BJ (cell line): ENCODE measurements at regions of chr22 and their contacts with region 1.

Region 1: DNA sequence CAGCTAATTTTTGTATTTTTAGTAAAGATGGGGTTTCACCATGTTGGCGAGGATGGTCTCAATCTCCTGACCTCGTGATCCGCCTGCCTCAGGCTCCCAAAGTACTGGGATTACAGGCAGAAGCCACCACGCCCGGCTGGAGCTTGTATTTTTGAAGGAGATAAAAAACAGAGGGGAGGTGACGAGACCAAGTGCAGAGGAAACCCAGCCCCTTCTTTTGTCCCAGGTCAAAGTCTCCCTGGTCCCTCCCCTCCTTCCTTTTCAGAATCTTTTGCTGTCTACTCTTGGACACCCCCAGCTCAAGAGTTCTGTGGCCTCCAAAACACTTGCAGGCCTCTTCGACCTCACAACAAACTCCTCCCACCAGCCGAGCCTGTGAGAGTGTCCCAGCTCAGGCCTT is 12.2 kb upstream of the TMEM184B start:
- DNase-seq: no peak
- H3K4me3 ChIP-seq: no peak overlapping the region
- H3K27me3 ChIP-seq: no peaks in the 10 kb centered on the region
- CTCF ChIP-seq: no peak

Region 2: DNA sequence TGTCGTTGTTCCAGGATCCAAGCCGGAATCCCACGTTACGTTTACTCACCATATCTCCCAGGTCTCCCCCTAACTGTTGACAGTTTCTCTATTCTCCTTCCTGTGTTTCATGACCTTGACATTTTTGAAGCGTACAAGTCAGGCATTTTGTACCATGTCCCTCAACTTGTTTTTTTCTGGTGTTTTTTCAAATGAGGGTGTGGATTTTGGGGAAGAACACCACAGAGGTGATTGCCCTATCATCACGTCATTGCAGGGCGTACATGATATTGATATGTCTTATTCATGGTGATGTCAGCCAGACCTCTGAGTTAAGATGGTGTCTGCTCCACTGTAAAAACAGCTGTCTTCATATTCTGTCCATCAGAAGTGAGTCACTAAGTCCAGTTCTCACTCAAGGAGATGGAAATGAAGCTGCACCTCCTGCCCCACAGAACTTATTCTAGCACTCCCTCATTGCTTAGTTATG is 272.4 kb before region 1 on chr22:
- CTCF ChIA-PET with region 1: no interaction called
- POLR2A ChIA-PET with region 1: no interaction called
- DNase-seq: no peak
- H3K4me3 ChIP-seq: no peak overlapping the region
- H3K27me3 ChIP-seq: 0 out of 2 replicates have a peak, but pooled peaks cover 1% of the 10 kb centered on the region
- CTCF ChIP-seq: no peak

Region 3: DNA sequence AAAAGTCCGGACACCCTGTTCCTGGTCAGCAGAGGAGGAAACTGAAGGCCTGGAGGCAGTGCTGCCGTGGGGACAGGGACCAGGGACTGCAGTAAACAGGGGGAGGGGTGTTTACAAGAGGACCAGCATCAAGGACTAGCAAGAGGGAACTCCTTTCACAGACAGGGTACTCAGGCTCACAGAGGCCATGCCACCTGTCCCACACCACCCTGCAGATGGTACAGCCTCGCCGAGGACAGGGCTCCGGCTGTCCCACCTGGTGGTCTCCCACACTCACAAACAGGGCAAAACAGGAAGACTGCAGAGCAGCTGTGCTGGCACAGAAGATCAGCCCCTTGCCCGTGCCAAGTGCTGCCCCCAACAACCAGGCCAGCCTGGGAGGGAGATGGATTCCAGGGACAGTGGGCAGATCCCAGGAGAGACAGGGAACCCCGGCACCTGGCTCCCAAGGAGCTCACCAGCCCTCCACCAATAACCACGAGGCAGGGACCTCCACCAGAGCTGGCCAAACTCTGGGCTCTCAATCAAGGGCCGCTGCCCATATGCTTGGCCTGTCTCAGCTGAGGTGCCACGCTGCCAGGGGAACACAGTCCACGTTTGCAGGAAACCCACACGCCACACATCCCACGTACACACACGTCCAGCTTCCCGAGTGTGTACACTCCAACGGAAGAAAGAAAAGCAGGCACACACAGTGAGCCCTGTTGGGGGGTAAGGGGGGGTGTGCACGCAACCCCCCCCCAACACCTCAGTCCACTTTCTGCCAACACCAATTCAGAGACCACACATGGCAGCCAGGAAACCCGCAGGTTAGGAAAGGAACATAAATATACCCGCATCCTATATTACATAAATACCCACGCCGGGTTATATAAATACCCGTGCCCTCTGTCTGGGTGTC is 30.2 kb after region 1 on chr22:
- CTCF ChIA-PET with region 1: no interaction called
- POLR2A ChIA-PET with region 1: interaction called, 13 read pairs
- DNase-seq: no peak
- H3K4me3 ChIP-seq: peak overlapping the region; percentile 84
- H3K27me3 ChIP-seq: no peaks in the 10 kb centered on the region
- CTCF ChIP-seq: no peak

Region 4: DNA sequence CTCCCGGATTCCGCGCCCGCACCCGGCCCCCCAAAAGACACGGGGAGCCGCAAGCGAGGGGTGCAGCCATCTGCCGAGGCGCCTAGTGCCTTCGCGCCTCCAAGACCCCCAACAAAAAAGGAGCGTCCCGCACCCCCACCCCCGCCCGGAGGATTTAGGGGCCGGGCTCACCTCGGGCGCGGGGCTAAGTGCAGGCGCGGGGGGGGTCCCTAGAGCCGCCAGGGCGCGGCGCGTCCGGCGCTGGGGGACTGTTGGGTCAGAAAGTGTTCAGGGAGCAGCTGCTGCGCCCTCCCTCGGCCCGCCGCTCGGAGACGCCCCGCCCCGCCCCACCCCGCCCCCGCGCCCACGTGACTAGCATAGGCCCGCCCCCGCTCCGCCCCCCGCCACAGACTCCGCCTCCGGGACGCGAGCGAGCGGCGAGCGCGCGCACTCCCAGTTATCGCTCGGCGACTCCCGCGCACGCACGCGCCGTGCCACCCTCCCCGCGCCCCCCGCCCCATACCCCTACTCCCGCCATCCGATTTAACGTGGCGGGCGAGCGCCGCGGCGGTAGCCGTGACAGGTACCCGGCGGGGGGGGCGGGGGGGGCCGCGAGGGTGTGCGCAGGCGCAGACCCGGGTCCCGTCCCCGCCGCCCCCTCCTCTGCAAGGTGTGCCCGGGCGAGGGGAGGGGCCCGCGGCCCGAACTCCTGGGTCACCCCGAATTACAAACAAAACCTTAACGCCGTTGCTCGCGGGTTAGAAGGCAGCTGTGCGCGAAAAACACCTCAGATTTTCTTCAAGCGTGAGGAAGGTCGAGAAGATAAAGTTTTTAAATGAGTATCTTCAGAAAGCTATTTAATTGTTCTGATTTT is 113.8 kb after region 1 on chr22:
- CTCF ChIA-PET with region 1: no interaction called
- POLR2A ChIA-PET with region 1: no interaction called
- DNase-seq: no peak
- H3K4me3 ChIP-seq: peak overlapping the region; percentile 73
- H3K27me3 ChIP-seq: peaks cover 11% of the 10 kb centered on the region
- CTCF ChIP-seq: no peak

Region 5: DNA sequence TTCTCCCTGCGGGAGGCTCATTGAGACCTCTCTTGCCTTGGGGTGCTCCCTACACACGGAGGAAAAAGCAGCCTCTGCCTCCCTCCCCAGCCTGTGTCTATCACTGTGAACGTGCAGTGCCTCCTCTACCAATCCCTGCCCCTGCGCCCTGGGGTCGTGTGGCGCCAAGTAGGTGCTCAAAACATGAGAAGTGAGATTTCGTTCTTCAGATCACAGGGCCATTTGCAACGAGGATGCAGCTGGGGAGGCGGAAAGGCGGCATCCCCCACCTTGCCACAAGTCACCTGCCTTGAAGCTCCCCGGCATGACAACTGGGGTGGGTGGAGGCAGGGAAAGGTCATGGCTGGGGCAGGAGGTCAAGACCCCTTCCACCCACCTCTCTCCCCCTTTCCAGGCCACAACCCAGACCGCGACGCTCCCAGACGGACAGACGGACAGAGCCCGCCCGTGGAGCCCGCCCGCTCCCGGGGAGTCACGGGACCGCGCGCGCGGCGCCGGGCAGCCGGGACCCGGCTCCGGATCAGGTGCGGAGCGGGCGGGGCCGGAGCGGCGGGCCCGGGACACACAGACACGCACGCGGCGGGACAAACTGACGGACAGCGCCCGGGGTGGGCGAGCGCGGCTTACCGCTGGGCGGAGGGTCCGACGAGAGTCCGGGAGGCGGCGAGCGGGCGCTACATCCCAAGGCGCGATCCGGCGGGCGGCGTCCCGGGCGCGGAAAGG is 169.5 kb after region 1 on chr22:
- CTCF ChIA-PET with region 1: no interaction called
- POLR2A ChIA-PET with region 1: no interaction called
- DNase-seq: no peak
- H3K4me3 ChIP-seq: peak overlapping the region; percentile 20; the same call in 1 of the 2 replicates
- H3K27me3 ChIP-seq: peaks cover 61% of the 10 kb centered on the region
- CTCF ChIP-seq: no peak